Left lung (tissue), 14 donors: ENCODE measurements at regions of chr1 and their contacts with region 1.

Region 1: GRCh38 chr1:169466259-169467230 is 19.2 kb downstream of the SLC19A2 start:
- DNase-seq: peak in 2 of 4 donors; percentile 25 to 49
- ATAC-seq: peak; percentile 62
- H3K4me3 ChIP-seq: no peak overlapping the region
- H3K27ac ChIP-seq: no peak overlapping the region
- H3K4me1 ChIP-seq: no peaks in the 10 kb centered on the region
- H3K27me3 ChIP-seq: no peaks in the 10 kb centered on the region
- CTCF ChIP-seq: peak in 1 of 2 donors; percentile 34

Region 2: DNA sequence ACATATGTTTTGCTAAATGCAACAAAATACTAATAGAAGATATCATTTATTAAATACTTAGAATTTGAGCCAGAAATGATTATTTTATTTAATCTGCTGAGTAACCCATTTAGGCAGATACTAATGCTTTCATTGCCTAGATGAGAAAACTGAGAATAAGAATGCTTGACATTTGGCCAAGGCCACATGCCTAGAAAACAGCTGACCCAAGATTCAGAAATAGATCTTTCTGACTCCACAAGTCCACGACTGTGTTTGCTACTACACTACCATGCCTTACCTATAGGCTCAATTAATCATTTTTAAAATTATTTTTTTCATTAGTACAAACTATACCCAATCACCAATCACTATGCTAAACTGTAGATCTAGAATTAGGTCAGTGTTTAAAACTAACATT is 230.4 kb before region 1 on chr1:
- intact Hi-C with region 1: no loop called
- DNase-seq: no peak
- ATAC-seq: no peak
- H3K4me3 ChIP-seq: no peak overlapping the region
- H3K27ac ChIP-seq: no peak overlapping the region
- H3K4me1 ChIP-seq: no peaks in the 10 kb centered on the region
- H3K27me3 ChIP-seq: no peaks in the 10 kb centered on the region
- CTCF ChIP-seq: no peak

Region 3: GRCh38 chr1:169546087-169546995 is 79.8 kb after region 1 on chr1:
- intact Hi-C with region 1: loop called in 1 of 2 experiments (anchors 5 kb)
- DNase-seq: peak in 3 of 4 donors; percentile 22 to 82 (median 63)
- ATAC-seq: peak; percentile 94
- H3K4me3 ChIP-seq: no peak overlapping the region
- H3K27ac ChIP-seq: no peak overlapping the region
- H3K4me1 ChIP-seq: no peaks in the 10 kb centered on the region
- H3K27me3 ChIP-seq: no peaks in the 10 kb centered on the region
- CTCF ChIP-seq: peak; percentile 66 to 75